HEK293T (cell line): ENCODE measurements at regions of chr4 and their contacts with region 1.

Region 1: DNA sequence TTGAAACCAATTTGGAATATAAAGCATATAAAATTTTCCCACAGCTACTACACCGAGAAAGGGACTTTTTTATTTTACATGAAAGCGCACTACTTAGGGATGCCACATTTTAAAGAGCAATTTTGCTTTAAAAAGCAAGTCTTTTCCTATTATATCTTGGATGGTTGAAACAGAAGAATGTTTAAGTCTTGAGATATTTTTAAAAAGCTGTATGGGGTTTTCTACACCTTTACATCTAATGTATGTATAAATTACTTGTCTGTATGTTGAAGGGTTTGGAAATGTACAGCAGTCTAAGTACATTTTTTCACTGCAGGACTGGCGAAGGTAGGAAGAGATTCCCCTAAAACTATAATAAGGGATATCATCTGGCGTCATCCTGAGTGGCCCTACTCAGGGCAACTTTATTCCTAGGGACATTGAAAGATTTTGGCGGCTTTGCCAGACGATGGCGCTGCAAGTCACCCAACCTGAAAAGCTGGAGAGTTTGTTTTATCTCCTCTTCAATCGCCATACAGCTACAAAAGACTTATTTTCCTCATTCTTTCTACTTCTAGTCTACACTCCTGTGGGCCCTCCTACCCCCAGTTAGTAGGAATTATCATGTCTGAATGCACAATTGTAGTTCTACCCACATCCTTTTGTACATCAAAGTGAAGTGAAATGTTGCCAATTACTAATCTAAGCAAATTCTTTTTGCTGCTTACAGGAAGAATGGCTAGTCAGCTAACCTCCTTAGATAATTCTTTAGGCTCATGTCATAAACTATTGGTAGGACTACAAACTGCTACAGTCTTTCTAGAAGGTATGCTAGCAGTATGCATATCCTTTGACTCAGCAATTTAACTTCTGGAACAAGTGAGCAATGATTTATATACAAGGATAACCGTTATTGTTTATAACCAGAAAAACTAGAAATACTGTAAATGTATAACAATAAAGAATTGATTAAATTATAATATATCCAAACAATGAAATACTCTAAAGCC is 782 bp upstream of the NEK1 start:
- DNase-seq: peak; percentile 53

Region 2: GRCh38 chr4:169659716-169660670 is 46.8 kb after region 1 on chr4:
- CTCF ChIA-PET with region 1: interaction called, 3 read pairs
- POLR2A ChIA-PET with region 1: interaction called, 41 read pairs
- DNase-seq: peak; percentile 80

Region 3: GRCh38 chr4:169723207-169723965 is 110.2 kb after region 1 on chr4:
- CTCF ChIA-PET with region 1: interaction called, 31 read pairs
- POLR2A ChIA-PET with region 1: interaction called, 3 read pairs
- DNase-seq: peak; percentile 9